WTC11 (cell line): ENCODE measurements at regions of chr19 and their contacts with region 1.

Region 1: DNA sequence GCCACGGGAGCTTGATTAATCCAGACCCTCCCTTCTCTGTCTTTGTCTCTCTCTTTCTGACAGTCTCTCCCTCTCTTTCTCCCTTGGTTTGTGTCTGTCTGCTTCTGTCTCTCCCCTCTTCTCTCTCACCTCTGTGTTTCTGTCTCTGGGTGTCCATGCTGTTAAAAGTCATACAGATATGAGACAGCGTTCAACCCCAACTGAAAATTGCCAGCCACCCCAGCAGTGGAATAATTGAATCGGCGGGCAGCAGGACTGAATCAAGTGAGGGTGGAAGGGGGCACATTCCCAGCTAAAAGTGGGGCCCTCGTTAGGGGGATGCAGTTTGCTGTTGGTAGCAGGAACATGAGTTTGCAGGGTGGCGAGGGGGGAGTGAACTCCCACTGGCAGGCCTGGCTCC is 43.7 kb downstream of the TINCR start:
- DNase-seq: no peak
- ATAC-seq: no peak
- H3K4me3 Mint-ChIP-seq: no peak overlapping the region
- H3K27ac Mint-ChIP-seq: no peak overlapping the region
- H3K4me1 Mint-ChIP-seq: peaks cover 9% of the 10 kb centered on the region
- H3K27me3 Mint-ChIP-seq: peaks cover 16% of the 10 kb centered on the region
- CTCF ChIP-seq: no peak

Region 2: GRCh38 chr19:5536337-5536894 is 12.3 kb after region 1 on chr19:
- CTCF ChIA-PET with region 1: interaction called, 22 read pairs
- POLR2A ChIA-PET with region 1: no interaction called
- DNase-seq: peak; percentile 91
- ATAC-seq: peak; percentile 85
- H3K4me3 Mint-ChIP-seq: peak overlapping the region; percentile 55
- H3K27ac Mint-ChIP-seq: peak overlapping the region; percentile 84
- H3K4me1 Mint-ChIP-seq: peaks cover 21% of the 10 kb centered on the region
- H3K27me3 Mint-ChIP-seq: peaks cover 46% of the 10 kb centered on the region
- CTCF ChIP-seq: no peak